ENCODE measurements at regions of chr3 and their contacts with region 1.

Region 1: DNA sequence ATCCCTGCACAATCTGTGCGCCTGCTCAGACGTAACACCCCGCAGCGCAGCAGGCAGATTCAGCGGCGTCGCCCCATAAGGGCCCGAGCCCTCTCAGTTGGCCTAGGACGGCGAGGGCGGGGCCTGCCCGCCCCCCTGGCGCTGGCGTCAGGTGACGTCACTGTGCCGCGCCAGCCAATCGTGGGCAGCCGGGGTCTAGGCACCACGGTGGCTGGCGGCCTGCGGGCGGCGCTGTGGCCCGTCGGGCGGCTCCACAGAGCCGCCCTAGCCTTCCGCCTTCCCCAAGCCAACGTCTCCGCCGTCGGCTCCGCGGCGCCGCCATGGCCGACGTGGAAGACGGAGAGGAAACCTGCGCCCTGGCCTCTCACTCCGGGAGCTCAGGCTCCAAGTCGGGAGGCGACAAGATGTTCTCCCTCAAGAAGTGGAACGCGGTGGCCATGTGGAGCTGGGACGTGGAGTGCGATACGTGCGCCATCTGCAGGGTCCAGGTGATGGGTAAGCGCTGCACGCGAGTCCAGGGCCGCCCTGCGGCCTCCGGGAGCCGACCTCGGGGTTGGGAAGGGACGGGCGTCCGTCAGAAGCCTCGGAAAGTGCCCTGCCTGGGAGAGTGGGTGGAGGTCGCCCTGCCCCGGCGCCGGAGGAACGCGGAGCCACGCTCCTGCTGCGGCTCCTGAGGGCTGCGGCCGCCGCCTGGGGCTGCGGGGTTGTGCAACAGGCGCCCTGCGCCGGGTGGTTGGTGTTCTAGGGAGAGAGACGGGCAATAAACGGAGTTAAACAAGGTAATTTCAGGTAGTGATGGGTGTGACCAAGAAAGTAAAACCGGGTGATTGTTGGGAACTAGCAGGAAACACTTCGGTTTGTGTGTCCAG is at the start of gene RNF7:
- DNase-seq: peak; percentile 98
- H3K4me3 Mint-ChIP-seq: peak within 1 kb of the TSS; percentile 88
- H3K27ac Mint-ChIP-seq: peak within 1 kb of the TSS; percentile 98
- H3K4me1 Mint-ChIP-seq: peaks cover 42% of the 10 kb centered on the region
- H3K27me3 Mint-ChIP-seq: peaks cover 3% of the 10 kb centered on the region
- total RNA-seq, gene RNF7: 68.8 to 72.9 TPM

Region 2: DNA sequence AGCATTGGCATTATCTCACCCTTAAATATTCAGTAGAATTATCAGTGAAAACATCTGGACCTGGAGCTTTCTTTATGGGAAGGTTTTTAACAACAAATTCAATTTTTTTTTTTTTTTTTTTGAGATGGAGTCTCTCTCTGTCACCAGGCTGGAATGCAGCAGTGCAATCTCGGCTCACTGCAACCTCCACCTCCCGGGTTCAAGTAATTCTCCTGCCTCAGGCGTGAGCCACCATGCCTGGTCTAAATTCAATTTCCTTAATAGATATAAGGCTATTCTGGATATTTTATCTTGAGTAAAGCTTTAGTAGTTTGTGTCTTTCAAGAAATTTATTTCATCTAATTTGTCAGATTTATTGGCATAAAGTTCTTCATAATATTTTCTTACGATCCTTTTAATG is 22.8 kb before region 1 on chr3:
- CTCF ChIA-PET with region 1: interaction called, 12 read pairs
- POLR2A ChIA-PET with region 1: no interaction called
- DNase-seq: no peak
- H3K4me3 Mint-ChIP-seq: no peak overlapping the region
- H3K27ac Mint-ChIP-seq: no peak overlapping the region
- H3K4me1 Mint-ChIP-seq: no peaks in the 10 kb centered on the region
- H3K27me3 Mint-ChIP-seq: peaks cover 9% of the 10 kb centered on the region

Region 3: GRCh38 chr3:141753399-141753798 is 15.1 kb after region 1 on chr3:
- CTCF ChIA-PET with region 1: interaction called, 3 read pairs
- POLR2A ChIA-PET with region 1: interaction called, 11 read pairs
- DNase-seq: no peak
- H3K4me3 Mint-ChIP-seq: no peak overlapping the region
- H3K27ac Mint-ChIP-seq: no peak overlapping the region
- H3K4me1 Mint-ChIP-seq: no peaks in the 10 kb centered on the region
- H3K27me3 Mint-ChIP-seq: no peaks in the 10 kb centered on the region

Region 4: GRCh38 chr3:141796081-141796888 is 58.0 kb after region 1 on chr3:
- CTCF ChIA-PET with region 1: interaction called, 31 read pairs
- POLR2A ChIA-PET with region 1: interaction called, 65 read pairs
- DNase-seq: peak; percentile 80
- H3K4me3 Mint-ChIP-seq: peak overlapping the region; percentile 84
- H3K27ac Mint-ChIP-seq: peak overlapping the region; percentile 97
- H3K4me1 Mint-ChIP-seq: peaks cover 46% of the 10 kb centered on the region
- H3K27me3 Mint-ChIP-seq: peaks cover 3% of the 10 kb centered on the region

Region 5: DNA sequence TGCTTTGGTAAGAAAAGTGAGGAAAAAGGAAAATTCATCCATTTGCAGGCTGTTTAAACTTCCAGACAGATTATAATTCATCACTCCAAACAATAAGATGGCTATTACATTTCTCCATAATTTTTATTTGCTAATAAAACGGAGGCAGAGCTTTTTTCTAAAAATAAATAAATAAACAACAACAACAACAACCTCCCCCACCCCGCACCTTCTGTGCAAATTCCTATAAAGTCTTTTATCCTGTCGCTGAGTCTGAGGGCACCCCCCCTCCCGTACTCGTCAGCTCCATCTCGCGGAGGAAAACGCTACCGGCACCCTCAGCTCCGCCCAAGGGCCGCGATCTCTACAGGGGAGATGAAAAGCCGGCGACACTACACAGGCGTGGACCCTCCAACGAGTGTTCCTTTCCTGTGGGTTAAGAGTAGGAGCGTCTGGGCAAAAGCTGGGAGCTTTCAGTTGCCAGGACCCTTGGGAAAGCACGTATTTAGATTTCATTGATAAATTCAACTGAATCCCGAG is 137.2 kb after region 1 on chr3:
- CTCF ChIA-PET with region 1: interaction called, 76 read pairs
- POLR2A ChIA-PET with region 1: interaction called, 90 read pairs
- DNase-seq: peak; percentile 86
- H3K4me3 Mint-ChIP-seq: peak overlapping the region; percentile 84
- H3K27ac Mint-ChIP-seq: peak overlapping the region; percentile 90
- H3K4me1 Mint-ChIP-seq: peaks cover 37% of the 10 kb centered on the region
- H3K27me3 Mint-ChIP-seq: no peaks in the 10 kb centered on the region

Region 6: DNA sequence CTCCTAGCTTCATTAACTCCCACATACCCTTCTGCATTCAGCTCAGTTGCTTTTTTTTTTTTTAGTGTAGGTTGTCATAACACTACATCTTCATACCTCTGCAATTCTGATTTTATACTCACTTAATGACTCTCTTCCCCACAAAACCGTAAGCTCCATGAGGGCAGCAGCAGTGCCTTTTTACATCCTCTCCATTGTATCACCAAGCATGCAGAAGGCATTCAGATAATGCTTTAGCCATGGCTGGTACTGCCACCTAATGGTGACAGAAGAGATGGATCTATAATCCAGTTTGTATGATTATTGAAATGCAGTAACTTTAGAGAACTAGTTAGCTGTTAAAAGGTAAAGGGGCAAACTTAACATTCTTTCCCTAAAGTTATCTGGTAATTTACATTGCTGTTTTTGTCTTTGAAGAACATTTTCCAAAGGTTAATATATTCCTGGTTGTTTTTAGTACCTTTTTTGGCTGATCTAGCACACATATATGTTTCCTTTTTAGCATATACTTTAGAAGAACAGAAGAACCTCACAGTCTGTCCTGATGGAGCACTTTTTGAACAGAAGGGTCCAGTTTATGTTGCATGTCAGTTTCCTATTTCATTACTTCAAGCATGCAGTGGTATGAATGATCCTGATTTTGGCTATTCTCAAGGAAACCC is 175.0 kb after region 1 on chr3:
- CTCF ChIA-PET with region 1: interaction called, 24 read pairs
- POLR2A ChIA-PET with region 1: interaction called, 12 read pairs
- DNase-seq: peak; percentile 58
- H3K4me3 Mint-ChIP-seq: no peak overlapping the region
- H3K27ac Mint-ChIP-seq: no peak overlapping the region
- H3K4me1 Mint-ChIP-seq: peaks cover 4% of the 10 kb centered on the region
- H3K27me3 Mint-ChIP-seq: no peaks in the 10 kb centered on the region

Measured in activated CD4-positive, alpha-beta memory T cell treated with anti-CD3 and anti-CD28 coated beads, Interleukin-2, amount 10 ng/mL, durations not matched to agents 7 days and 5 days (primary cell).